ENCODE measurements at regions of chr4 and their contacts with region 1.

Region 1: DNA sequence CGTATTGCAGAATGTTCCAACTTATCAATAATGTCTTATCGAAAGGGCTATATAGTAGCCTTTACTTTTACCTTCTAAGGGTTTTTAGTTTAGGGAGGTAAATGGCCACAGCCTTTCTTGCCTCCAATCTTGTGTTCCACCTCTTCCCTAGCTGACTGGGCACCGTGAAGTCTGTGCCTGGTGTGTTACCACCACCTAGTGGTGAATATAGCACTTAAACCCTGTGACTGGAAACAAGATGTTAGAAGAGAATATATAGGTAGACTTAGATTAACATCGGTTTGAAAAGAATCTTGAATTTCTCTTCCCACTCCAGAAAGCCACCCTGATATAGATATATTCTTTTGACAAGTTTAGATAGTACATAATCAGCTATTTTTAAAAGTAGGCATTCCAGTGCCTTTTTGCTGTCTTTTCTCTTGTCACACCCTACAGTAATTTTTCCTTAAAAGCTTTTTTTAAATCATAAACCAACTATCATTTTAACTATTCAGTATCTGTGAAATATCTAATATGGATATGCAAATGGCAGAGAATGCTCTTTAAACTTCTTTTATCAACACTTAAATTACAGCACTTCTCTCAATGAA is 27.8 kb upstream of the ADH7 start:
- DNase-seq: peak; percentile 82
- H3K4me3 Mint-ChIP-seq: no peak overlapping the region
- H3K27ac Mint-ChIP-seq: no peak overlapping the region
- H3K4me1 Mint-ChIP-seq: peaks cover 11% of the 10 kb centered on the region
- H3K27me3 Mint-ChIP-seq: peaks cover 12% of the 10 kb centered on the region
- CTCF ChIP-seq: peak; percentile 84

Region 2: DNA sequence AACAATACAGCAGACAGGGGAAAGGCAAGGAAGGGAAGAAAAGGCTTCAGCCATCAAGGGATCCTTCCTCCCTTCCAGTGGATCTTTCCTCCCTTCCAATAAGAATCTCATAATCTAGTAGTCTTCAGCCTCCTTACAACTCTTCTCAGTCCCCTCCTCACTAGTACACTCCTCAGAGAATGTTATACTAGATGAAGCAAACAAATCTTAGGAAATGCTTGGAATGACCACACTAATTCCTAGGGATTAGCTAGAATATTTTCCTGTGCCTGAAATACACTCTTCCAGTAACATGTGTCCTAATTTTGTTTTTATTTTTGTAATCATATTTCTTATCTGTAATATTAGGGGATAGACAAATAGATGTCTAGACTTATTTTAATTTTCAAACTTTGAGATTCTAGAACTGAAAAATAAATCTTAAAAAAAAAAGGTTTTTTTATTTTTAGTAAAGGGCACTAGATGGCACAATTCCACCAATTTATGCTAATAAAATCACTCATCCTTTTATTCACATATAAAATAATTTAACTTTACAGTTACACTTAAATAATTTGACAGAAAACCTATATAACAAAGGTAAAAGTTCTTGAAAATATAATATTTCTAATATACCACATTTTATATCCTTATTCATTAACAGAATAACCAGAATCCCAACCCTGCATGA is 1312.7 kb before region 1 on chr4:
- CTCF ChIA-PET with region 1: interaction called, 3 read pairs
- POLR2A ChIA-PET with region 1: no interaction called
- intact Hi-C with region 1: loop called (anchors 2 kb)
- DNase-seq: peak; percentile 20
- H3K4me3 Mint-ChIP-seq: no peak overlapping the region
- H3K27ac Mint-ChIP-seq: no peak overlapping the region
- H3K4me1 Mint-ChIP-seq: no peaks in the 10 kb centered on the region
- H3K27me3 Mint-ChIP-seq: no peaks in the 10 kb centered on the region
- CTCF ChIP-seq: peak; percentile 30

Region 3: GRCh38 chr4:99117876-99118693 is 344.9 kb before region 1 on chr4:
- CTCF ChIA-PET with region 1: interaction called, 23 read pairs
- POLR2A ChIA-PET with region 1: interaction called, 5 read pairs
- intact Hi-C with region 1: loop called (anchors 1 kb)
- DNase-seq: peak; percentile 30
- H3K4me3 Mint-ChIP-seq: no peak overlapping the region
- H3K27ac Mint-ChIP-seq: no peak overlapping the region
- H3K4me1 Mint-ChIP-seq: no peaks in the 10 kb centered on the region
- H3K27me3 Mint-ChIP-seq: no peaks in the 10 kb centered on the region
- CTCF ChIP-seq: peak; percentile 25

Region 4: GRCh38 chr4:99205153-99205979 is 257.6 kb before region 1 on chr4:
- CTCF ChIA-PET with region 1: interaction called, 32 read pairs
- POLR2A ChIA-PET with region 1: interaction called, 4 read pairs
- intact Hi-C with region 1: loop called (anchors 1 kb)
- DNase-seq: peak; percentile 83
- H3K4me3 Mint-ChIP-seq: no peak overlapping the region
- H3K27ac Mint-ChIP-seq: peak overlapping the region; percentile 43
- H3K4me1 Mint-ChIP-seq: peaks cover 25% of the 10 kb centered on the region
- H3K27me3 Mint-ChIP-seq: no peaks in the 10 kb centered on the region
- CTCF ChIP-seq: no peak

Region 5: GRCh38 chr4:99366491-99366890 is 96.5 kb before region 1 on chr4:
- CTCF ChIA-PET with region 1: no interaction called
- POLR2A ChIA-PET with region 1: no interaction called
- intact Hi-C with region 1: no loop called
- DNase-seq: no peak
- H3K4me3 Mint-ChIP-seq: no peak overlapping the region
- H3K27ac Mint-ChIP-seq: no peak overlapping the region
- H3K4me1 Mint-ChIP-seq: peaks cover 5% of the 10 kb centered on the region
- H3K27me3 Mint-ChIP-seq: no peaks in the 10 kb centered on the region
- CTCF ChIP-seq: no peak

Region 6: GRCh38 chr4:99405433-99406115 is 57.4 kb before region 1 on chr4:
- CTCF ChIA-PET with region 1: interaction called, 89 read pairs
- POLR2A ChIA-PET with region 1: interaction called, 4 read pairs
- intact Hi-C with region 1: loop called (anchors 1 kb)
- DNase-seq: peak; percentile 84
- H3K4me3 Mint-ChIP-seq: no peak overlapping the region
- H3K27ac Mint-ChIP-seq: peak overlapping the region; percentile 76
- H3K4me1 Mint-ChIP-seq: peaks cover 16% of the 10 kb centered on the region
- H3K27me3 Mint-ChIP-seq: no peaks in the 10 kb centered on the region
- CTCF ChIP-seq: peak; percentile 96

Region 7: DNA sequence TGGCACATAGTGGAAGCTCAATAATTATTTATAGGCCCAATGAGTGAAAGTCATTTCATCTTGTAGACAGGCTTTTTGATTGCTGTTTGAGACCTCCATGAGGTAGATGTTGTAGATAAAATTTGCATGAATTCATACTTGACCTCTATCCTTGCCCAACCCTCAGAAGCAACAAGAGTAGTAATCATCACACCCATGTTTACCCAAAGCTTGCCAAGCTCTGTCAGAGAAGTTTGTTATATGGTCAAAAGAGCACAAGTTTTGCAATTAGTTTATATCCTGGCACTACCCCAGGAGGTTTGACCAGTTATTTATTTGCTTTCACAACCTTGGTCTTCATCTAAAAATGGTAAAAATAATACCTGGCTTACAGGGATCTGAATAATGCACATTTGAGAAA is 48.6 kb before region 1 on chr4:
- CTCF ChIA-PET with region 1: interaction called, 89 read pairs
- POLR2A ChIA-PET with region 1: interaction called, 8 read pairs
- intact Hi-C with region 1: no loop called
- DNase-seq: peak; percentile 87
- H3K4me3 Mint-ChIP-seq: no peak overlapping the region
- H3K27ac Mint-ChIP-seq: no peak overlapping the region
- H3K4me1 Mint-ChIP-seq: no peaks in the 10 kb centered on the region
- H3K27me3 Mint-ChIP-seq: no peaks in the 10 kb centered on the region
- CTCF ChIP-seq: no peak

Region 8: DNA sequence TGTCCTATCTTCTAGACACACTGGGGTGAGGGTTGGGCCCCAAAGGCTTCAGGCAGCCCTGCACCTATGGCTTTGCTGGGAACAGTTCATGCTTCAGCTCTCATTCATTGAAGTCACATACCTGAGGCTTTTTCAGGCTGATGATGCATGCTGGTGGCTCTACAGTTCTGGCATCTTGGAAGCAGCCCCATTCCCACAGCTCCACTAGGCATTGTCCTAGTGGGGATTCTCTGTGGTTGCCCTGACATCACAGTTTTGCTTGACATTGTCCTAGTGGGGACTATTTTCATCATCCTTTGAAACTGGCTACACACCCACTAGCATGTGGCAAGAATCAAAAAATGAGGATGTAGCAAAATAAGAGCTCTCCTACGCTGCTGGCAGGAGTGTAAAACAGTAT is 10.2 kb after region 1 on chr4:
- CTCF ChIA-PET with region 1: interaction called, 23 read pairs
- POLR2A ChIA-PET with region 1: no interaction called
- intact Hi-C with region 1: no loop called
- DNase-seq: no peak
- H3K4me3 Mint-ChIP-seq: no peak overlapping the region
- H3K27ac Mint-ChIP-seq: no peak overlapping the region
- H3K4me1 Mint-ChIP-seq: no peaks in the 10 kb centered on the region
- H3K27me3 Mint-ChIP-seq: no peaks in the 10 kb centered on the region
- CTCF ChIP-seq: no peak

Measured in MCF 10A (cell line).